ENCODE measurements at regions of chr1 and their contacts with region 1.

Region 1: DNA sequence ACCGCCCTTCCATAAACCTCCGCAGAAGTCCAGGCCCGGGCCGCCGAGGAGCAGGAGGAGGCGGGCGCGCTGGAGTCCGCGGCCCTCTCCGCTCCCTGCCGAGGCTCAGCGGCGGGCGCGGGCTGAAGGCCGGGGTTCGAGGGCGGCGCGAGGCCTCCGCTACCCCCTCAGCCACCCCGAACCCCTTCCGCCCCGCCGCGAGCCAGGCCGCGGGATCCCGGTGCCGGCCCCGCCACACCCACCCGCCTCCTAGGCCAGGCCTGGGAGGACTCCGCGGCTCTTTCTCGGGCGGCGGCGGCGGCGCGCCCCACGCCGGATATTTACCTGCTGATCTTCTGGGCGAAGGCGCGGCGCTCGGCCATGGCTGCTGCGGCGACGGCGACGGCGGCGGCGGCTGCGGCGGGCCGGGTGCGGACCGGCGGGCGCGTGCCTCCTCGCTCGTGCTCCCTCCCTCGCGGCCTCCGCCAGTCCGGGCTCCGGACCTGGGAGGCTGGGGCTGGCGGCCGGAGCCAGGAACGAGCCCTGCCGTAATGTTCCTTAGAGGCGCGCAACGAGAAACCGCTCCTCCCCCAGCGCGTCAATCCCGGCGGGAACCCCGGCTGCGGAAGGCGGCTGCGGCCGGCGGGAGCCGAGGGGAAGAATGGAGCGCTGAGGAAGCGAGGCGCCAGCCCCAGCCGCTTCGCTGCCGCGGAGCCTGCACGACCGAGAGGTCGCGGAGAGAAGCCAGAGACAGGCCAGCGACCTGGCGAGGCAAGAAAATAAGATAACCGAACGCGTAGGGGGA is at the start of gene DOCK7:
- DNase-seq: peak; percentile 53
- ATAC-seq: peak; percentile 87
- H3K4me3 ChIP-seq: peak within 1 kb of the TSS; percentile 69 to 86
- H3K27ac ChIP-seq: peak within 1 kb of the TSS; percentile 74
- H3K4me1 ChIP-seq: peaks cover 9 to 63% of the 10 kb centered on the region in 2 experiments
- H3K27me3 ChIP-seq: no peaks in the 10 kb centered on the region
- CTCF ChIP-seq: no peak
- POLR2A ChIP-seq: peak; percentile 38
- RAD21 ChIP-seq: peak; percentile 9; the same call in 1 of the 2 replicates
- total RNA-seq, gene DOCK7: 49.0 TPM

Region 2: GRCh38 chr1:60874716-60875115 is 1813.4 kb before region 1 on chr1:
- CTCF ChIA-PET with region 1: no interaction called
- POLR2A ChIA-PET with region 1: no interaction called
- RAD21 ChIA-PET with region 1: no interaction called
- intact Hi-C with region 1: no loop called
- DNase-seq: peak; percentile 8
- ATAC-seq: peak; percentile 63
- H3K4me3 ChIP-seq: no peak overlapping the region
- H3K27ac ChIP-seq: no peak overlapping the region
- H3K4me1 ChIP-seq: peaks cover 0 to 8% of the 10 kb centered on the region in 2 experiments; a peak in 2 of 4 replicates
- H3K27me3 ChIP-seq: no peaks in the 10 kb centered on the region
- CTCF ChIP-seq: no peak
- POLR2A ChIP-seq: no peak
- RAD21 ChIP-seq: no peak

Region 3: GRCh38 chr1:62436466-62437256 is 251.4 kb before region 1 on chr1 and contains the start of gene USP1:
- CTCF ChIA-PET with region 1: no interaction called
- POLR2A ChIA-PET with region 1: no interaction called
- RAD21 ChIA-PET with region 1: no interaction called
- intact Hi-C with region 1: loop called (anchors 2 kb)
- DNase-seq: peak; percentile 99
- ATAC-seq: peak; percentile 88
- H3K4me3 ChIP-seq: peak within 1 kb of the TSS; percentile 93 to 98
- H3K27ac ChIP-seq: peak within 1 kb of the TSS; percentile 98
- H3K4me1 ChIP-seq: peaks cover 6 to 21% of the 10 kb centered on the region in 2 experiments; a peak in 3 of 4 replicates
- H3K27me3 ChIP-seq: no peaks in the 10 kb centered on the region
- CTCF ChIP-seq: no peak
- POLR2A ChIP-seq: peak; percentile 65
- RAD21 ChIP-seq: no peak
- total RNA-seq, gene USP1: 37.8 TPM

Region 4: GRCh38 chr1:62810420-62811274 is 122.6 kb after region 1 on chr1:
- CTCF ChIA-PET with region 1: no interaction called
- POLR2A ChIA-PET with region 1: no interaction called
- RAD21 ChIA-PET with region 1: no interaction called
- intact Hi-C with region 1: no loop called
- DNase-seq: no peak
- ATAC-seq: no peak
- H3K4me3 ChIP-seq: no peak overlapping the region
- H3K27ac ChIP-seq: no peak overlapping the region
- H3K4me1 ChIP-seq: no peaks in the 10 kb centered on the region
- H3K27me3 ChIP-seq: no peaks in the 10 kb centered on the region
- CTCF ChIP-seq: no peak
- POLR2A ChIP-seq: no peak
- RAD21 ChIP-seq: no peak

Measured in HCT116 (cell line).